Activated CD4-positive, alpha-beta T cell treated with anti-CD3 and anti-CD28 coated beads for 36 hours (primary cell): ENCODE measurements at regions of chr17 and their contacts with region 1.

Region 1: DNA sequence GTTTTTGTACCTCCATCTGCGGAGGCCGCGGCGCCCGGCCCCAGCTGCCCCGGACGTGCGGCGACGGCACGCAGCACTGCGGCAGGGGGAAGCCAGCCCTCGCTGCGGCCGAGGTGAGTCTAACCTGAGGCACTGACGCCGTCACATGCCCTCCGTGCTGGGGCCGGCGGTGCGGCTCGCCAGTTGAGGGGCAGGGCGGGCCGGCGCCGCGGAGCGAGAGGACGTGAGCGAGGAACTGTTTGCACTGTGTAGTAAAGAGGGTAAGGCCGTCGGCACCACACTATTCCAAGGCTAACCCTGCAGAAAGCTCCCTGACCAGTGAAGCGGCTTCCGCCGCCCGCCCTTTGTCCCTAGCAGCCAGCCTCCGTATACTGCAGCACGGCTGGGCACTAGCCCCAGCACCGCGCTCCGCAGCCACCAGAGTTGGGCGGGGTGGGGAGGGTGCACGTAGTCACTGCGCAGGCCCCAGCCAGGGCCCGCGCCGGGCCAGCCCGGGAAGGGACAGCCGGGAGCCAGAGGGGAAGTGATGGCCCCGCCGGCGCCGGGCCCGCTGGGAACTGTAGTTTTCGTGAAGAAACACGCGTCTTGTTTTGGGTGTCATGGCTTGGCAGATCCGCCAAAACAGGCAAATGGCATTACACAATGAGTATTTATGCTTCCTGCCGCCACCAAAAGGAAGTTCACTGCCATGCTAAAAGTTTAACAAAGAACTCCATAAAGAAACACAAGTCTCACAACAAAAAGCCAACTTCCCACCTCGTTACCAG is 580 bp upstream of the KANSL1 start:
- DNase-seq: peak; percentile 96
- ATAC-seq: peak; percentile 83
- H3K4me3 Mint-ChIP-seq: peak overlapping the region; percentile 74
- H3K27ac Mint-ChIP-seq: peak overlapping the region; percentile 94
- H3K4me1 Mint-ChIP-seq: peaks cover 56% of the 10 kb centered on the region
- H3K27me3 Mint-ChIP-seq: no peaks in the 10 kb centered on the region

Region 2: GRCh38 chr17:45228763-45229539 is 964.9 kb before region 1 on chr17:
- CTCF ChIA-PET with region 1: no interaction called
- POLR2A ChIA-PET with region 1: no interaction called
- intact Hi-C with region 1: loop called in 1 of 2 experiments (anchors 5 kb)
- DNase-seq: peak; percentile 93
- ATAC-seq: peak; percentile 37
- H3K4me3 Mint-ChIP-seq: peak overlapping the region; percentile 94
- H3K27ac Mint-ChIP-seq: peak overlapping the region; percentile 100
- H3K4me1 Mint-ChIP-seq: peaks cover 82% of the 10 kb centered on the region
- H3K27me3 Mint-ChIP-seq: no peaks in the 10 kb centered on the region

Region 3: GRCh38 chr17:45867702-45868101 is 326.1 kb before region 1 on chr17:
- CTCF ChIA-PET with region 1: no interaction called
- POLR2A ChIA-PET with region 1: no interaction called
- intact Hi-C with region 1: no loop called
- DNase-seq: no peak
- ATAC-seq: no peak
- H3K4me3 Mint-ChIP-seq: no peak overlapping the region
- H3K27ac Mint-ChIP-seq: no peak overlapping the region
- H3K4me1 Mint-ChIP-seq: peaks cover 5% of the 10 kb centered on the region
- H3K27me3 Mint-ChIP-seq: peaks cover 11% of the 10 kb centered on the region

Region 4: GRCh38 chr17:46044286-46044928 is 149.4 kb before region 1 on chr17:
- CTCF ChIA-PET with region 1: interaction called, 10 read pairs
- POLR2A ChIA-PET with region 1: interaction called, 3 read pairs
- intact Hi-C with region 1: loop called in 1 of 2 experiments (anchors 2 kb)
- DNase-seq: peak; percentile 65
- ATAC-seq: no peak
- H3K4me3 Mint-ChIP-seq: no peak overlapping the region
- H3K27ac Mint-ChIP-seq: peak overlapping the region; percentile 11
- H3K4me1 Mint-ChIP-seq: peaks cover 17% of the 10 kb centered on the region
- H3K27me3 Mint-ChIP-seq: no peaks in the 10 kb centered on the region

Region 5: GRCh38 chr17:46092991-46093390 is 100.8 kb before region 1 on chr17:
- CTCF ChIA-PET with region 1: interaction called, 4 read pairs
- POLR2A ChIA-PET with region 1: no interaction called
- intact Hi-C with region 1: loop called in 1 of 2 experiments (anchors 5 kb)
- DNase-seq: no peak
- ATAC-seq: no peak
- H3K4me3 Mint-ChIP-seq: no peak overlapping the region
- H3K27ac Mint-ChIP-seq: no peak overlapping the region
- H3K4me1 Mint-ChIP-seq: peaks cover 59% of the 10 kb centered on the region
- H3K27me3 Mint-ChIP-seq: no peaks in the 10 kb centered on the region

Region 6: DNA sequence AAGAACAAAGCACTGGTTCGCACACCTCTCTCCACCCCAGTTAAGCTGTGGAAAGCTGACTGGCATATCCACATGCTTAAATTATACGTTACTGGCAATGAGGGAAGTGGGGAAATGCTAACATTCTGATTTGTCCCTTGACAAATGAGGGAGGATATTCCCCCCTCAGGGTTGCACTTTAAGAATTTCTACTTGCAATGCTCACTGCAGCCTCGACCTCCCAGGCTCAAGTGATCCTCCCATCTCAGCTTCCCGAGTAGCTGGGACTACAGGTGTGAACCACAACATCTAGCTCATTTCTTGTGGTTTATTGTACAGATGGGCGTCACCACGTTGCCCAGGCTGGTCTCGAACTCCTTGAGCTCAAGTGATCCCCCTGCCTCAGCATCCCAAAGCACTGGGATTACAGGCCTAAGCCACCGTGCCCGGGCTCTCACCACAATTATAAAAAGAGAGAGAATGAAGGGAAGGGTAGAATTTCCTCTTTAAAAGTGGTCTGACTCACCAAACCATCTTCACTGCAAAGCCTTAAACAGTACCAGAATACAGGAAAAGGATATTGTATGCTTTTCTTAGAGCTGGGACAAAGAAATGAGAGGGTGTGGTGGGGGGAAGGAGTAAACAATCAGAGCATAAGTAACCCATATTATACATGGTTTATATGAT is 39.5 kb before region 1 on chr17:
- CTCF ChIA-PET with region 1: interaction called, 10 read pairs
- POLR2A ChIA-PET with region 1: interaction called, 5 read pairs
- intact Hi-C with region 1: loop called (anchors 1 to 2 kb)
- DNase-seq: peak; percentile 40
- ATAC-seq: peak; percentile 16
- H3K4me3 Mint-ChIP-seq: peak overlapping the region; percentile 46
- H3K27ac Mint-ChIP-seq: peak overlapping the region; percentile 52
- H3K4me1 Mint-ChIP-seq: peaks cover 90% of the 10 kb centered on the region
- H3K27me3 Mint-ChIP-seq: no peaks in the 10 kb centered on the region

Region 7: GRCh38 chr17:46212634-46213435 is 19.0 kb after region 1 on chr17:
- CTCF ChIA-PET with region 1: interaction called, 14 read pairs
- POLR2A ChIA-PET with region 1: no interaction called
- intact Hi-C with region 1: loop called (anchors 1 kb)
- DNase-seq: peak; percentile 61
- ATAC-seq: peak; percentile 66
- H3K4me3 Mint-ChIP-seq: no peak overlapping the region
- H3K27ac Mint-ChIP-seq: no peak overlapping the region
- H3K4me1 Mint-ChIP-seq: peaks cover 23% of the 10 kb centered on the region
- H3K27me3 Mint-ChIP-seq: no peaks in the 10 kb centered on the region